ENCODE measurements at regions of chr11 and their contacts with region 1.

Region 1: DNA sequence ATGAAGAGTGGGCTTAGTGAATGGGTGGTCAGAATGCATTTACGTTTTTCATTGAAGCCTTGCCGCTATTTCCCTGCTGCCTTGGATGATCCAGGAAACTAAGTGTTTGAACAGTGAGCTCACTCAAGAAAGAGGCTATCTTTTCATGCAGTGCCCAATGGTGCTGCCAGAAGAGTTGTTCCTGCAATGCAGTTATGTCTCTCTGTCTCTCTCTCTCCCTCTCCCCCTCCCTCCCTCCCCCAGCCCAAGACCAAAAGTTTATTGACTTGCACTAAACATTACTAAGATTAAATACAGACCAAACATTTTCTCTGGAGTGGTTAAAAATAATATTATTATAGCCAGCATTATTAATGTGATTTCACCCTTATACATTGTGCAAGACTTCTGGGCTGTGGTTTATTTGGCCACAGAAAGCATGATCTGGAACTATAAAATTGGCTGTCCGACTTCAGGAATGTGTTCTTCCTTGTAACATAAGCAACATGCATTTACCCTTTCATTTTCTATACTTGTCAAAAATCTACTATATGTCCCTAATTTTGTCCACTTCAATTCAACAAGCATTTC is 6.6 kb upstream of the FUT4 start:
- DNase-seq: peak in 1 of 2 experiments; percentile 4
- ATAC-seq: peak in 1 of 2 experiments; percentile 35; a peak in 1 of 6 replicates
- H3K4me3 ChIP-seq: no peak overlapping the region
- H3K27ac ChIP-seq: no peak overlapping the region
- H3K4me1 ChIP-seq: peaks cover 9% of the 10 kb centered on the region; the same call in 1 of the 3 replicates
- CTCF ChIP-seq: no peak
- EP300 ChIP-seq: no peak
- POLR2A ChIP-seq: no peak
- RAD21 ChIP-seq: no peak

Region 2: GRCh38 chr11:94519478-94520084 is 17.5 kb before region 1 on chr11:
- CTCF ChIA-PET with region 1: interaction called, 10 read pairs
- POLR2A ChIA-PET with region 1: no interaction called
- DNase-seq: peak in 1 of 2 experiments; percentile 6
- ATAC-seq: peak; percentile 47 to 57; a peak in 2 of 6 replicates
- H3K4me3 ChIP-seq: no peak overlapping the region
- H3K27ac ChIP-seq: no peak overlapping the region
- H3K4me1 ChIP-seq: no peaks in the 10 kb centered on the region
- CTCF ChIP-seq: peak; percentile 61
- EP300 ChIP-seq: no peak
- POLR2A ChIP-seq: no peak
- RAD21 ChIP-seq: peak; percentile 48 to 57; a peak in 4 of 5 replicates